Dorsolateral prefrontal cortex (tissue), 120 donors: ENCODE measurements at regions of chr11 and their contacts with region 1.

Region 1: DNA sequence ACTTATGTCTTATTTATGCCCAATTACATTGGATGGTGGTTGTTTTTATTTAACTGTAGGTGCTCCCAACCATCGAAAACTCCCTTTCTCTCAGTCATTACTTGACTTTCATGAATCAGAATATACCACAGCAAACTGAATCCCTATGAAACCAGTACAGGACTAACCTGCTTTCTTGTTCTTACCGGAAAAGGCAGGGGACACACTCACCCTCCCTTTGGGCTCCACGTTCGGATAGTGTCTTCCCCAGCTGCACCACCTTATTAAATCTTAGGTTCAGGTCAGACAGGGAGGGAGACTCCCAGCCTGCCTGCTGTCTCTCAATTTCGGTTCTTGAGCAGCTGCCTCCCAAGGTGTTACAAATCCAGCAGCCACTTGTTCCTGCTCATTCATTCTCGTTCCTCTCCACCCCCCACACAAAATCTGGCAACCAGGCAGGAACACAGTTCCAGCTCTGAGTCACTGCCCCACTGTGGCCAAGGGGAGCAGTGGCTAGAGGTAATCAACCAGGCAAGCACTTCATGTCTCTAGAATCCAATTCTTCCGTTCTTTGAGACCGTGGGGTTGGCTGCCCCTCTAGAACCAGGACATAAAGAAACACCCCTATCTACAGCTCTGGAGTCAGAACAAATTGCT is 133.0 kb downstream of the PLEKHA7 start:
- DNase-seq: peak in 5 of 10 donors; percentile 17 to 49 (median 31)
- H3K4me3 ChIP-seq: no peak overlapping the region
- H3K27ac ChIP-seq: no peak overlapping the region
- H3K27me3 ChIP-seq: peaks cover 0 to 9% (median 0%) of the 10 kb centered on the region in 45 donors
- CTCF ChIP-seq: peak in 24 of 56 donors; percentile 7 to 40 (median 18)

Region 2: DNA sequence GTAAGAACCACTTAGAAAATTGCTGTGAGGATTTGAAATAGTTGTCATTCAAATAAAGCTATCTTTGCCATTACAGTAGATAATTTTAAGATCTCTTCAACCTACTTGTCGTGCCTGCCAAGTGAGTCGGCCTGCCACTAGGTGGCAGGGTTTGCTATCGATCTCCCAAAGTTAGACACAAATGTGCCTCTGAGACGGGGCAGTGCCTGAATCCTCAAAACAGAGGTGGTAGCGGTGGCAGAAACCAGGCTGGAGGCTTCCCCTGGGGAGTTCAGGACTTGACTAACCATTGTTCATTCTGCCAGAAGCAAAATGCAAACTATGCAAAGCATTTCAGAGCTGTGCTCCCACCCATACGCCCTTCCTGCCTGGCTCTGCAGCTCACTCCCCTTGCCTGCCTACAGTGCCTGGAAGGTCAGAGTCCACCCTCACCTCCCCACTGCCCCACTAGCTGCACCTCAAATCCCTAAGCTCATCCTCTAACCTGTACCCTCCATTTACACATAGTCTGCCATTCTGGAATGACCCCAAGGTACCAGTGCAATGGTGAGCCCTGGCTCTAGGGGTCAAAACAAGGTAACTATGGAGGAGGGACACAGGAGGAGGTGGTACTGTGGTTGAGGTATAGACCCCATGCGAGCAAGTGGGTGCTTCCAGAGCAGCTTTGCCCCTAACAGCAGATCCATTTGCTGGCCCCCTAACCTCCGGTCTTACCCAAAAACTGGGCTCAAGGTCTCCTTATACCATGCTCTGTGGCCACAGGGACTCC is 60.7 kb before region 1 on chr11:
- intact Hi-C with region 1: loop called in 1 of 2 experiments (anchors 5 kb)
- DNase-seq: peak in 9 of 10 donors; percentile 62 to 87 (median 81)
- H3K4me3 ChIP-seq: no peak overlapping the region
- H3K27ac ChIP-seq: no peak overlapping the region
- H3K27me3 ChIP-seq: no peaks in the 10 kb centered on the region
- CTCF ChIP-seq: peak; percentile 55 to 93 (median 83)

Region 3: DNA sequence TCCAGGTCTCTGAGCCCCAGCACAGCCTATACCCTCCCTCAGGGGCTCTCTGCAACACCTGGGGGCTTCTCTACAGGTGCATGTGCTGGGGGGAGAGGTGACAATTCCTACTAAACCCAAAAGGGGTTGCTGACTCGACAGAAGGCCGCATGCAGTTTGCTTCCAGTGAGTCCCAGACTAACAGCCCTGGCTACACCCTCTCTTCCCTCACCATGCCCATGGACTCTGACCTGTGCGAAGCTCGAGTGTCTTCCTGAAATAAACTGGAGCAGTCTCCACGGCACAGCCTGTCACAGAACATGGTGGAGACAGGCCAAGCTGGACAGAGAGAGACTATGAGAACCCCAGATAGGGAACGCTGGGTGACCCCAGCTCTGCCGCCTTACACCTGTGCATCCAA is 116.4 kb after region 1 on chr11:
- intact Hi-C with region 1: no loop called
- DNase-seq: no peak
- H3K4me3 ChIP-seq: no peak overlapping the region
- H3K27ac ChIP-seq: no peak overlapping the region
- H3K27me3 ChIP-seq: no peaks in the 10 kb centered on the region
- CTCF ChIP-seq: no peak